ENCODE measurements at regions of chr17 and their contacts with region 1.

Region 1: DNA sequence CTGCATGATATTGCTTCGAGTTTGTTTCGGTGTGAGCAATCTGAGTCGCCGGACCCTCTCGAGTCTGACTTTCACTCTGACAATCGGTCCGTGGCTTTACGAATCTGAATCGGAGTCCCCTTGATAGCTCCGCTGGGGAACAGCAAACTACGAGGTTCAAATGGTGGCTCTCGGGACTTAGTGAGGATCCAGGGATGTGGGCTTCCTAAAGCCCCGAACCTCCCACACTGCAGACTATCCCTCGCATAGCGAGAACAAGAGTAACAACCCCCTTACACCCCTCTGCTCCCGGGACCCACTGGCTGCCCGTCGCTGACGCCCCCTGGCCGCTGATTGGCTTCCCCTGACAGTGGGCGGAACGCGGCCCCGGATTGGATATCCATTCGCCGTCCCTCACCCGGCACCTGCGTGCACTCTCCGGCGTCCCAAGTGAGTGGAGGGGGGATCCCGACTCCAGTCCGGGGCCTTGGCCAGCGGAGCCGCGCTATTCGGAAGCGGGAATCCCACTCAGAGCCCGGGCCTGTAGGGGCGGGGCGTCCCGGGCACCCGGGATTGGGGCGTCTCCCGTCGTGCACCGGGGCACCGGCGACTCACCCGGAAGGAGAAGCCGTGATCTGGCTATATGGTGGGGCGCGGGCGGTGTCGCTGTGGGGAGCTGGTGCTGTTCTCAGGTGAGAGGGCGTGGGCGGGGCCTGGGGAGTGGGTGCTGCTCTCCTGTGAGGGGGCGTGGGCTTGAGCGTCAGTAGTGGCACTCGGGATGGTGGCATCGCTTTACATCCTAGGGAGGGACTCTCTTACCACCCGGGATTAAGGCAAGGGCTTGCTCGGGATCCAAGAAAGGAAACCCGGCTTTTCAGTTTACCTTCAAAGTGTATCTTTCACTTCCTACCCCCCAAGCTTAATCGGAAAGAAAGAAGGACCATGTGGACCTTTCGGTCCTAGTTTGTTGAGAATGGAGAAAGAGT is at the start of gene SNX11:
- DNase-seq: peak; percentile 95
- ATAC-seq: peak; percentile 88
- H3K4me3 Mint-ChIP-seq: peak within 1 kb of the TSS; percentile 98
- H3K27ac Mint-ChIP-seq: peak within 1 kb of the TSS; percentile 98
- H3K4me1 Mint-ChIP-seq: peaks cover 54% of the 10 kb centered on the region
- H3K27me3 Mint-ChIP-seq: no peaks in the 10 kb centered on the region
- CTCF ChIP-seq: no peak
- total RNA-seq, gene SNX11: 27.2 to 29.5 TPM

Region 2: DNA sequence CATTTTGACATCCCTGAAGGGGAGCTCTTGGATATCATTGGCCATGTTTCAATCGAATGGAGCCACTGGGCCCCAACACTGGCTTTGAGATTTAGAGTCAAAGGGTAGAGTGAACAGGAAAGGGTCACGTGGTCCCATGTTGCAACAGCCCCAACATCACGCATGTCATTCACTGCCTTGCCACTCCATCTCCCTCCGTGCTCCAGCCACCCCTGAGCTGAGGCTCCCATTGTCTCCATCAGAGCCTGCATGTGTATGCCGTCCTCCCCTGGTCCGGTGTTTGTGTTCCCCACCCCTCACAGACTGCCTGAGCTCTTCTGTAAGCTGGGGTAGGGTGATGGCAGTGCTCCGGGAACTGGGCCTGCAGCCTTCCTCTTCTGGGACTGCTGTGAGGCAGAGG is 47.2 kb before region 1 on chr17:
- CTCF ChIA-PET with region 1: no interaction called
- POLR2A ChIA-PET with region 1: no interaction called
- intact Hi-C with region 1: no loop called
- DNase-seq: no peak
- ATAC-seq: no peak
- H3K4me3 Mint-ChIP-seq: no peak overlapping the region
- H3K27ac Mint-ChIP-seq: peak overlapping the region; percentile 64
- H3K4me1 Mint-ChIP-seq: peaks cover 30% of the 10 kb centered on the region
- H3K27me3 Mint-ChIP-seq: no peaks in the 10 kb centered on the region
- CTCF ChIP-seq: no peak

Region 3: DNA sequence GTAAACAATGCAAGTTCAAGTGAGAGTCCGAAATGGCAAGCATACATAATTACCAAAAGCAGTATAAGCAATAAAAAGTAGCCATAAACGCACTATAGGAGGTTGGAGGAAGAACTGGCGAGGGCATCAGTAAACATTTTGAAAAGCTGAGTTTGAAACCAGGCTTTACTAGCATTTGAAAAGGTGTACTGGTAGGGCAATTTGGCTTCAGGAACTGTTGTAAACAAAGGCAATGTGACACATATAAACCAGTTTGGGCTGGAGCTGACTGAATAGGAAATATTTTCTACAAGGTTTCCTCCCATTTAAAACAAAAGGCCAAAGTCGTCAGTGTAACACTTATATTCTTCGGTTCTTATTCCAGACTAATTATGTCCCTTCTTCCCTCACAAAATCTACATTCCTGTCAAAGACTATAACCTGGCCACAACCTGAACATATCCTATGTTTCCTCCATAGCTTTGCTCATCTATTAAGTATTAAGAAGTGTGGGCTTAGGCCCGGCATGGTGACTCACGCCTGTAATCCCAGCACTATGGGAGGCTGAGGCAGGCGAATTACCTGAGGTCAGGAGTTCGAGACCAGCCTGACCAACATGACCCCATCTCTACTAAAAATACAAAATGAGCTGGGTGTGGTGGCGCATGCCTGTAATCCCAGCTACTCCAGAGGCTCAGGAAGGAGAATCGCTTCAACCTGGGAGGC is 14.0 kb before region 1 on chr17:
- CTCF ChIA-PET with region 1: interaction called, 25 read pairs
- POLR2A ChIA-PET with region 1: interaction called, 3 read pairs
- intact Hi-C with region 1: no loop called
- DNase-seq: no peak
- ATAC-seq: no peak
- H3K4me3 Mint-ChIP-seq: no peak overlapping the region
- H3K27ac Mint-ChIP-seq: no peak overlapping the region
- H3K4me1 Mint-ChIP-seq: peaks cover 13% of the 10 kb centered on the region
- H3K27me3 Mint-ChIP-seq: no peaks in the 10 kb centered on the region
- CTCF ChIP-seq: no peak

Region 4: GRCh38 chr17:48123111-48123510 is 15.7 kb after region 1 on chr17:
- CTCF ChIA-PET with region 1: interaction called, 6 read pairs
- POLR2A ChIA-PET with region 1: interaction called, 23 read pairs
- intact Hi-C with region 1: no loop called
- DNase-seq: no peak
- ATAC-seq: no peak
- H3K4me3 Mint-ChIP-seq: no peak overlapping the region
- H3K27ac Mint-ChIP-seq: no peak overlapping the region
- H3K4me1 Mint-ChIP-seq: no peaks in the 10 kb centered on the region
- H3K27me3 Mint-ChIP-seq: no peaks in the 10 kb centered on the region
- CTCF ChIP-seq: no peak

Region 5: GRCh38 chr17:48194097-48194550 is 86.7 kb after region 1 on chr17:
- CTCF ChIA-PET with region 1: no interaction called
- POLR2A ChIA-PET with region 1: no interaction called
- intact Hi-C with region 1: no loop called
- DNase-seq: peak; percentile 12
- ATAC-seq: peak; percentile 82
- H3K4me3 Mint-ChIP-seq: no peak overlapping the region
- H3K27ac Mint-ChIP-seq: no peak overlapping the region
- H3K4me1 Mint-ChIP-seq: peaks cover 36% of the 10 kb centered on the region
- H3K27me3 Mint-ChIP-seq: no peaks in the 10 kb centered on the region
- CTCF ChIP-seq: no peak

Region 6: GRCh38 chr17:48241131-48241591 is 133.7 kb after region 1 on chr17:
- CTCF ChIA-PET with region 1: no interaction called
- POLR2A ChIA-PET with region 1: no interaction called
- intact Hi-C with region 1: no loop called
- DNase-seq: peak; percentile 65
- ATAC-seq: peak; percentile 94
- H3K4me3 Mint-ChIP-seq: no peak overlapping the region
- H3K27ac Mint-ChIP-seq: peak overlapping the region; percentile 40
- H3K4me1 Mint-ChIP-seq: peaks cover 75% of the 10 kb centered on the region
- H3K27me3 Mint-ChIP-seq: no peaks in the 10 kb centered on the region
- CTCF ChIP-seq: no peak

Measured in activated CD8-positive, alpha-beta T cell treated with anti-CD3 and anti-CD28 coated beads for 36 hours (primary cell).